ENCODE measurements at regions of chr1 and their contacts with region 1.

Region 1: GRCh38 chr1:195430826-195431225 is 1177.4 kb downstream of the KCNT2 start:
- DNase-seq: no peak
- ATAC-seq: no peak
- H3K4me3 ChIP-seq: no peak overlapping the region
- H3K27ac ChIP-seq: no peak overlapping the region
- H3K4me1 ChIP-seq: no peaks in the 10 kb centered on the region
- H3K27me3 ChIP-seq: no peaks in the 10 kb centered on the region
- CTCF ChIP-seq: no peak
- EP300 ChIP-seq: no peak
- POLR2A ChIP-seq: no peak
- RAD21 ChIP-seq: no peak

Region 2: DNA sequence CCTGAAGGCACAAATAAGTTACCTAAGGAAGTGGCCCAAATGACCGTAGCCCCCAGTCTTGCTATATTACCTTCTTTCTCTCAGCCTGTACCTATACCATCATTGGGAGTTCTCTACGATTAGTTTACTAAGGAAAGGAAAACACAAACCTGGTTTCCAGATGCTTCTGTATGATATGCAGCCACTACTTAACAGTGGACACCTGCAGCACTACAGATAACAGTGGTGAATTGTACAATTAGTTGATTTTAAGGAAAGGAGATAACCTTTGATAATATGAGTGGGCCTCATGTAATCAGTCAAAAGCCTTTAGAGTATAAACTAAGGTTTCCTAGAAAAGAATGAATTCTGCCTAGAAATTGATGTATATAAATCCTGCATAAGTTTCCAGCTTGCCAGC is 20.0 kb after region 1 on chr1:
- CTCF ChIA-PET with region 1: no interaction called
- POLR2A ChIA-PET with region 1: no interaction called
- RAD21 ChIA-PET with region 1: no interaction called
- SMC1A ChIA-PET with region 1: no interaction called
- in situ Hi-C with region 1: no loop called
- intact Hi-C with region 1: loop called (anchors 2 kb)
- DNase-seq: no peak
- ATAC-seq: no peak
- H3K4me3 ChIP-seq: no peak overlapping the region
- H3K27ac ChIP-seq: no peak overlapping the region
- H3K4me1 ChIP-seq: no peaks in the 10 kb centered on the region
- H3K27me3 ChIP-seq: no peaks in the 10 kb centered on the region
- CTCF ChIP-seq: no peak
- EP300 ChIP-seq: no peak
- POLR2A ChIP-seq: no peak
- RAD21 ChIP-seq: no peak